ENCODE measurements at regions of chr18 and their contacts with region 1.

Region 1: GRCh38 chr18:58781627-58782194 is 83.0 kb upstream of the ZNF532 start:
- DNase-seq: peak; percentile 52 to 70 (median 64)
- H3K4me3 ChIP-seq: no peak overlapping the region
- H3K4me3 Mint-ChIP-seq: no peak overlapping the region
- H3K27ac ChIP-seq: no peak overlapping the region
- H3K27ac Mint-ChIP-seq: peak overlapping the region in 1 of 7 donors; percentile 2
- H3K4me1 ChIP-seq: no peaks in the 10 kb centered on the region
- H3K4me1 Mint-ChIP-seq: peaks cover 1% of the 10 kb centered on the region
- H3K27me3 ChIP-seq: no peaks in the 10 kb centered on the region
- H3K27me3 Mint-ChIP-seq: peaks cover 0 to 8% (median 2%) of the 10 kb centered on the region in 3 donors
- CTCF ChIP-seq: peak; percentile 87

Region 2: DNA sequence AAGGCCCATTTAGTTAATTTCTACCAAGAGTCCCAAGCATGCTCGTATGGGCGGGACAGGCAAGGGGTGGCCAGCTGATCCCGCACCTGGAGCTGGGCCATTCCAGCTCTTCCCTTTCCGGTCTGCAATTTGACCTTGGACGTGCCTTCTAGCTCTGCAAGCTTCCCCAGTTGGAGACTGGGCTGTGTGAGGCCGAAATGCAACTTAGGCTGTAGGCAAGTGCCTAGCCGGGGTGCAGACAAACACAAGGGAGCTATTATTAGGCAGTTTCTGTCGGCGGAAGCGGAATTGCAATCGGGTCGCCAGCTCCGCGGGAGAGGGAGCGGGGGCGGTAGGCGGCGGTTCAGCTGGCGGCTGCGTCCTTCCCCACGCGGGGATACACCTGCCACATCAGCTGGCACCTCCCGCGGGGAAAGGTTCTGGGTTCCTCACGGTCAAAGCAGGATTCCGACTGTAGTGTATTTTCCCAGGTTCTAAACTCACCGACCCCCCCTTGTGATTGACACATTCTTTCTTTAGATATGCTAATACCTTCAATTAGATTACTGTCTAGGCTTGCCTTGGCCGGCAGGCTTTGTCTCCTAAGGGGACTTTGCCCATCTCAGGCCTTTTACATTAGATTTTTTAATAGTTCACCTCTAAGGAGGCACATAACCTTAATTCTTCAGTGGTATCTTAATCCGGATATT is 65.8 kb after region 1 on chr18:
- intact Hi-C with region 1: no loop called
- DNase-seq: no peak
- H3K4me3 ChIP-seq: peak overlapping the region; percentile 4 to 66 (median 16)
- H3K4me3 Mint-ChIP-seq: peak overlapping the region; percentile 77 to 92
- H3K27ac ChIP-seq: no peak overlapping the region
- H3K27ac Mint-ChIP-seq: no peak overlapping the region
- H3K4me1 ChIP-seq: peaks cover 8 to 9% of the 10 kb centered on the region in 2 donors
- H3K4me1 Mint-ChIP-seq: peaks cover 36% of the 10 kb centered on the region
- H3K27me3 ChIP-seq: peaks cover 0 to 11% of the 10 kb centered on the region in 2 donors
- H3K27me3 Mint-ChIP-seq: peaks cover 14 to 36% (median 30%) of the 10 kb centered on the region in 3 donors
- CTCF ChIP-seq: no peak

Region 3: GRCh38 chr18:59056706-59057492 is 275.2 kb after region 1 on chr18:
- intact Hi-C with region 1: loop called (anchors 1 to 2 kb)
- DNase-seq: peak; percentile 37 to 54 (median 45)
- H3K4me3 ChIP-seq: no peak overlapping the region
- H3K4me3 Mint-ChIP-seq: no peak overlapping the region
- H3K27ac ChIP-seq: no peak overlapping the region
- H3K27ac Mint-ChIP-seq: no peak overlapping the region
- H3K4me1 ChIP-seq: no peaks in the 10 kb centered on the region
- H3K4me1 Mint-ChIP-seq: peaks cover 1% of the 10 kb centered on the region
- H3K27me3 ChIP-seq: no peaks in the 10 kb centered on the region
- H3K27me3 Mint-ChIP-seq: peaks cover 2% of the 10 kb centered on the region in 3 donors
- CTCF ChIP-seq: peak; percentile 81